Ovary (tissue), 10 donors: ENCODE measurements at regions of chr4 and their contacts with region 1.

Region 1: DNA sequence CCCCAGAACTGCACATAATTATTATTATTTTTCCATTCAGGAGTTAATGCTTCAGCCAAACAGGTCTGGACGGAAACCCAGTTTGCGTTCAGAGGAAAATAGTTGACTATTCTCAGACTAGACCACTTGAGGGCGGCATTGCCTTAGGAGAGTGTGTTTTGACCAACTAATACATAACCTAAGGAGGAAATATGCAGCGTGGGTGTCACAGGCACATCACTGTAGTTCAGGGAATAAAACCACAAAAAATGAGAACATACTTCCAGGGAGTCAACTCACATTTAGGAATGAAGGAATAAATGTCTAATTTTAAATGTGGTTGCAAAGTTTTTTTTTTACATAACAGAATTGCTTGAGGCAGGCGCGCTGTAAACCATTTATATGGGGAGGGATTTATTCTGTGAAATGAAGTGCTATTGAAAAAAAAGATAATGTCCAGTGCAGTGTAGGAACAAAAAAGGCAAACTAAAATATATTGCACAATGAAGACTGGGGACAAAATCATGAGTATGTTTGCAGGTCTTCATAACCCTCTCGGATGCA is 93.3 kb downstream of the SYNPO2 start:
- DNase-seq: peak; percentile 50 to 79 (median 69)
- H3K4me3 ChIP-seq: no peak overlapping the region
- H3K27ac ChIP-seq: no peak overlapping the region
- H3K4me1 ChIP-seq: peaks cover 10% of the 10 kb centered on the region
- H3K27me3 ChIP-seq: no peaks in the 10 kb centered on the region
- CTCF ChIP-seq: peak; percentile 67 to 86 (median 79)
- EP300 ChIP-seq: no peak
- POLR2A ChIP-seq: no peak

Region 2: DNA sequence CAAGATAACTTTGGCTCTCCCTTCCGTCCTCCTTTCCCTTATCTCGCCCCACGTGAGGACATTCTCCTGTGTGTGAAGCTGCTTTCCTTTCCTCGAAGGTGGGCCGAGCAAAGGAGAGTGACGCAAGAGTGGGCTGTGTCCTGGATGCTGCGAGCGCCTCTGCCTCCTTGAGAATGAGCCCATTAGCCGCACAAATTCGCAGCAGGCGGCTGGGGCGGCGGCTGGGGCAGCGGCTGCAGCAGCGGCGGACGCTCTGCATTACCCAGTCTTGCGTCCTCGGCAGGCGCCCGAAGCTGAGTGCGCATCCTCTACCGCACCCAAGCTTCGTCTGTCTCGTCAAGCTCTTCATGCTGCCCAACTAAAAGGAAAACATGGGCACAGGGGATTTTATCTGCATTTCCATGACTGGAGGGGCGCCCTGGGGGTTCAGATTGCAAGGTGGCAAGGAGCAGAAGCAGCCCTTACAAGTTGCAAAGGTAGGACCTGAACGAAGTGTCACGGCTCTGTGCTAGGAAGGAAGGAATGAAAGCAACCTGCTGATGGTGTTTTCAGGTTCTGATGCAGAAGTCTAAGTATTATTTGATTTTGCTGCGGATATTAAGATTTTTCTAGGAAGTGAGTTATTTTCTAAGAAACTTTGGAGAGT is 93.1 kb before region 1 on chr4 and contains the start of gene SYNPO2:
- intact Hi-C with region 1: no loop called
- DNase-seq: peak; percentile 91 to 94 (median 92)
- H3K4me3 ChIP-seq: peak within 1 kb of the TSS; percentile 66
- H3K27ac ChIP-seq: peak within 1 kb of the TSS; percentile 16 to 71
- H3K4me1 ChIP-seq: peaks cover 1% of the 10 kb centered on the region
- H3K27me3 ChIP-seq: no peaks in the 10 kb centered on the region
- CTCF ChIP-seq: no peak
- EP300 ChIP-seq: no peak
- POLR2A ChIP-seq: peak; percentile 92
- total RNA-seq, gene SYNPO2: 61.9 to 265 (median 165) TPM

Region 3: GRCh38 chr4:119041951-119042560 is 60.1 kb after region 1 on chr4:
- intact Hi-C with region 1: loop called in 2 of 4 experiments (anchors 10 kb)
- DNase-seq: peak in 3 of 5 donors; percentile 29 to 72 (median 35)
- H3K4me3 ChIP-seq: no peak overlapping the region
- H3K27ac ChIP-seq: peak overlapping the region in 1 of 2 donors; percentile 63
- H3K4me1 ChIP-seq: peaks cover 15% of the 10 kb centered on the region
- H3K27me3 ChIP-seq: no peaks in the 10 kb centered on the region
- CTCF ChIP-seq: peak in 2 of 3 donors; percentile 53 to 57
- EP300 ChIP-seq: no peak
- POLR2A ChIP-seq: no peak

Region 4: DNA sequence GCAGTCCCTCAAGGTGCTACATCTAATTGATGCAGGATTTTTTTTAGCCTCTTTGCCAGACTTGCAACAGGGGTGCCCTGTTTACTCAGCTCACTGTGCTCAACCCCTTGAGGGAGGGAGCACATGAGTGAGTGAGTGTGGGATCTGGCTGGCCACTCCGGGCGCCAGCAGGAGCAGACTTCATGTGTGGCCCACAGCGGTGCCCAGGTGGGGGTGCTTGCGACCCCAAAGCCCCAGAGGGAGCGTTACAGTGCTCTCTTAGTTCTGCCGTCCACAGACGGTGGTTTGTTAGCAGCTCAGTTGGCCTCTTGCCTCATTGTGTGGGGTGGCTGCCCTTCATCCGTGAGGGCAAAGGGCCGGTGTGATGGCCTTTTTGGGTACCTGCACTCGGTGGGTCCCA is 72.1 kb after region 1 on chr4:
- intact Hi-C with region 1: no loop called
- DNase-seq: no peak
- H3K4me3 ChIP-seq: no peak overlapping the region
- H3K27ac ChIP-seq: no peak overlapping the region
- H3K4me1 ChIP-seq: no peaks in the 10 kb centered on the region
- H3K27me3 ChIP-seq: no peaks in the 10 kb centered on the region
- CTCF ChIP-seq: no peak
- EP300 ChIP-seq: no peak
- POLR2A ChIP-seq: no peak

Region 5: GRCh38 chr4:119212234-119212963 is 230.5 kb after region 1 on chr4 and contains the start of gene USP53:
- intact Hi-C with region 1: loop called in 1 of 4 experiments (anchors 10 kb)
- DNase-seq: peak; percentile 98 to 99 (median 99)
- H3K4me3 ChIP-seq: peak within 1 kb of the TSS; percentile 90
- H3K27ac ChIP-seq: peak within 1 kb of the TSS; percentile 90 to 92
- H3K4me1 ChIP-seq: no peaks in the 10 kb centered on the region
- H3K27me3 ChIP-seq: no peaks in the 10 kb centered on the region
- CTCF ChIP-seq: peak in 1 of 3 donors; percentile 64
- EP300 ChIP-seq: peak; percentile 43
- POLR2A ChIP-seq: peak; percentile 87
- total RNA-seq, gene USP53: 19.6 to 98.9 (median 21.6) TPM

Region 6: GRCh38 chr4:119286377-119287002 is 304.6 kb after region 1 on chr4:
- intact Hi-C with region 1: loop called (anchors 5 to 10 kb)
- DNase-seq: peak in 2 of 5 donors; percentile 35 to 51
- H3K4me3 ChIP-seq: no peak overlapping the region
- H3K27ac ChIP-seq: no peak overlapping the region
- H3K4me1 ChIP-seq: no peaks in the 10 kb centered on the region
- H3K27me3 ChIP-seq: no peaks in the 10 kb centered on the region
- CTCF ChIP-seq: peak; percentile 28 to 85 (median 70)
- EP300 ChIP-seq: no peak
- POLR2A ChIP-seq: no peak

Region 7: DNA sequence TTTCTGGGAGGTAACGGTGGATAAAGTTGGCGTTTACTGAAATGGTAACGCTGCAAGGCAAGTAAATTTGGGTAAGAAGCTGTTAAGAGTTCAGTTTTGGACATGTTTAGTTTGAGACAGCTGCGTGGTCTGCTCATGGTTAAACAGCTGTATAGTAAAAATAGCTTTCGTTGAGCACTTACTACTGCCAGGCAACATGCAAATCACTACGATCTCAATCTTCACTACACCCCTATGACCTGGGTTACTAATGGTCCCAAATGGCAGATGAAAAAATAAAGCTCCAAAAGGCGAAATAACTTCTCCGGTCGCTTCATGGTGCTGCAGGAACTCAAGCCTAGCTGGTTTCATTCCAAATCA is 317.8 kb after region 1 on chr4:
- intact Hi-C with region 1: loop called in 3 of 4 experiments (anchors 5 to 10 kb)
- DNase-seq: no peak
- H3K4me3 ChIP-seq: peak overlapping the region; percentile 47
- H3K27ac ChIP-seq: peak overlapping the region; percentile 62 to 87
- H3K4me1 ChIP-seq: peaks cover 6% of the 10 kb centered on the region
- H3K27me3 ChIP-seq: no peaks in the 10 kb centered on the region
- CTCF ChIP-seq: no peak
- EP300 ChIP-seq: no peak
- POLR2A ChIP-seq: no peak